Naive thymus-derived CD4-positive, alpha-beta T cell (primary cell): ENCODE measurements at regions of chr10 and their contacts with region 1.

Region 1: DNA sequence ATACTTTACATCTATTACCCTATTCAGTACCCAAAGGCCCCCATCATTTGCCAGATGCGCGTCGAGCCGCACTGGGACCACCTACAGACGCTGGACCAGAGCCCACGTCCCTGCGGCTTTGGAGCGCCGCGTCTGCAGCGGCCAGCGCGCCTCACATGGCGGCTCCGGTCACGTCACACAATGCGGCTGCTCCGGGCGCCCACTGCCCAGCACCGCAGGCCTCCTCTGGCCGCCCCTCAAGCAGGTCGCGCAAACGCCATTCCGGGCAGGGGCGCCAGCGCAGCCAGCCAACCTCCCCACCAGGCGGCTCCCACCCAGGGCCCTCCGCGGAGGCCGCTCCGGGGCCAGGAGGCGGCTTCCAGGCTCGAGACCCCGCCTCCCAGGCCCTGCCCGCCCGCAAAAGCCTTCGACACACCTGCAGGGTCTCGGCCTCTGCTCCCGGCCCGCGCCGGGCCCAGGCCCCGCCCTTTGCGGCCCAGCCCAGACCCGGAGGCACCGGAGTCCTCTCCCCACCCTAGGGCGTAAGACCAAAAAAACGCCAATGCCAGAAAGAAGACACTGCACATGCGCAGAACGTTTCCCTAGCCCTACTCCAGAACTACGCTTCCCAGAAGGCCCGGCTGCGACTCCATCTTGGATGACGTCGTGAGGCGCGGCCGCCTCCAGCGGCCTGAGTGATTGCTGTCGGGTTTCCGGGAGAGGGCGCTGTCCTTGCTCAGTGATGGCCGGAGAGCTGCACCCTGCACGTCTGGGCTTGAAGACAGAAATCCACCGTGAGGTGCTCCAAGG is at the start of gene ZNF25:
- DNase-seq: peak; percentile 83 to 97 (median 96)
- ATAC-seq: peak; percentile 94
- H3K4me3 ChIP-seq: peak within 1 kb of the TSS; percentile 62
- H3K4me3 Mint-ChIP-seq: peak within 1 kb of the TSS; percentile 87 to 100 (median 95)
- H3K27ac ChIP-seq: peak within 1 kb of the TSS; percentile 95
- H3K27ac Mint-ChIP-seq: peak within 1 kb of the TSS; percentile 92 to 99 (median 97)
- H3K4me1 ChIP-seq: peaks cover 6 to 10% of the 10 kb centered on the region in 2 donors
- H3K4me1 Mint-ChIP-seq: peaks cover 19 to 36% (median 27%) of the 10 kb centered on the region in 7 donors
- H3K27me3 ChIP-seq: no peaks in the 10 kb centered on the region
- H3K27me3 Mint-ChIP-seq: peaks cover 0 to 2% (median 0%) of the 10 kb centered on the region in 5 donors
- total RNA-seq, gene ZNF25: 7.0 to 13.9 (median 10.1) TPM

Region 2: DNA sequence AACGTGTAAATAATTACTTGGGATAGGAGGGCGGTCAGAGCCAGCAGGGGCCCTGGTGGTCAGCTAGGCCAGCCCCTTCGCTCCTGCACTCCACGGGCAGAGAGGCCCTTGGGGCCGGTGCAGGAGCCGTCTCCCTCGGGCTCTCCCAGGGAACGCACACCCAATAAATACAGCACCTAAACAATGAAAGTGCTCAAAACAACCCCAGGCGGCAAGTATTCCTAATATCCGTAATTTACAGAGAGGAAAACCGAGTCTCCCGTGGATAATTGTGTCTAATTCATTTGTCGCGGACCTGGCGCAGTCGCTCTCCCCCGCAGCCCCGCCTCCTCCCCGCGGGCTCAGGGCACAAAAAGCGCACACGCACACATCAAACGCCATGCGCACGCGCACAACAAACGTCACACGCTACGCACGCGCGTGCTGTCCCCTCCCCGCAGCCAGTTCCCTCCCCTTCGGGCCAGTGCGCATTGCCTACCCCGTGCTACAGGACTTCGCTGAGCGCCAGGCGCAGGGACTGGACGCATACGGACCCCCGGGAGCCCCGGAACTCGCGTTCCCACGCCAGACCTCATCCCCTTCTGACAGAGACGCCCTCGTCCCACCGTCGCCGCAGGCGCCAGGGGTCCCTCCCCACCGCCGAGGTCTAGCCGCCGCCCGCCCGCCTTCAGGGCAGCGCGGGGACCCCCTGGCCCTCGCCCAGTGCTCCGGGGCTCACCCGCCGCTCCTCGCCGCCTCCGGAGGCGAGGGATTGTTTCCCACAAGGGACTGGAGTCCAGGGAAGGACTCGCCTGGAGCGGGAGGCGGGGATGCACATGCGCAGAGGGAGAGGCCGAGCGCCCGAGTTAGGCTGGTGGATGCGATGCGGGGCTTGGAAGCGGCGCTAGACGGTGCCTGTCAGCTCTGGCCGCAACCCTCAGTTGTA is 118.7 kb before region 1 on chr10 and contains the start of gene ZNF248:
- CTCF ChIA-PET with region 1: interaction called, 4 read pairs
- POLR2A ChIA-PET with region 1: interaction called, 12 read pairs
- intact Hi-C with region 1: loop called (anchors 1 kb)
- DNase-seq: peak; percentile 91 to 95 (median 94)
- ATAC-seq: peak; percentile 98
- H3K4me3 ChIP-seq: peak within 1 kb of the TSS; percentile 93
- H3K4me3 Mint-ChIP-seq: peak within 1 kb of the TSS; percentile 89 to 98 (median 94)
- H3K27ac ChIP-seq: peak within 1 kb of the TSS; percentile 96
- H3K27ac Mint-ChIP-seq: peak within 1 kb of the TSS; percentile 86 to 99 (median 98)
- H3K4me1 ChIP-seq: peaks cover 9 to 23% of the 10 kb centered on the region in 2 donors
- H3K4me1 Mint-ChIP-seq: peaks cover 30 to 53% (median 45%) of the 10 kb centered on the region in 7 donors
- H3K27me3 ChIP-seq: no peaks in the 10 kb centered on the region
- H3K27me3 Mint-ChIP-seq: peaks cover 0 to 2% (median 0%) of the 10 kb centered on the region in 5 donors
- total RNA-seq, gene ZNF248: 5.4 to 26.9 (median 11.0) TPM

Region 3: DNA sequence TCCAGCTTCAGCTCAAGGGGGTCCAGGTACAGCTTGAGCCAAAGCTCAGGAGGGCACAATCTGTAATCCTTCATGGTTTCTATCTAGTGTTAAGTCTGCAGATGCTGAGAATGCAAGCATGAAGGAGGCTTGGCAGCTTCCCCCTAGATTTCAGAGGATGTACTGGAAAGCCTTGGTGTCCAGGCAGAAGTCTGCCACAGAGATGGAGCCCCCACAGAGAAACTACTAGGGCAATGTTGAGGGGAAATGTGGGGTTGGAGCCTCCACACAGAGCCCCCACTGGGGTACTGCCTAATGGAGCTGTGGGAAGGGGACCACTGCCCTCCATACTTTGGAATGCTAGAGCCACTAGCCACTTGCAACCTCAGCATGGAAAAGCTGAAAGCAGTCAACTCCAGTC is 11.3 kb before region 1 on chr10:
- CTCF ChIA-PET with region 1: interaction called, 3 read pairs
- POLR2A ChIA-PET with region 1: interaction called, 10 read pairs
- intact Hi-C with region 1: no loop called
- DNase-seq: no peak
- ATAC-seq: no peak
- H3K4me3 ChIP-seq: no peak overlapping the region
- H3K4me3 Mint-ChIP-seq: no peak overlapping the region
- H3K27ac ChIP-seq: no peak overlapping the region
- H3K27ac Mint-ChIP-seq: no peak overlapping the region
- H3K4me1 ChIP-seq: no peaks in the 10 kb centered on the region
- H3K4me1 Mint-ChIP-seq: peaks cover 0 to 6% (median 0%) of the 10 kb centered on the region in 7 donors
- H3K27me3 ChIP-seq: no peaks in the 10 kb centered on the region
- H3K27me3 Mint-ChIP-seq: no peaks in the 10 kb centered on the region